Transverse colon (tissue), 4 donors: ENCODE measurements at regions of chr12 and their contacts with region 1.

Region 1: GRCh38 chr12:82414044-82414443 is 55.7 kb downstream of the METTL25 start:
- DNase-seq: no peak
- H3K4me3 ChIP-seq: no peak overlapping the region
- H3K27ac ChIP-seq: no peak overlapping the region
- H3K4me1 ChIP-seq: no peaks in the 10 kb centered on the region
- H3K27me3 ChIP-seq: no peaks in the 10 kb centered on the region
- CTCF ChIP-seq: no peak
- EP300 ChIP-seq: no peak
- POLR2A ChIP-seq: no peak

Region 2: DNA sequence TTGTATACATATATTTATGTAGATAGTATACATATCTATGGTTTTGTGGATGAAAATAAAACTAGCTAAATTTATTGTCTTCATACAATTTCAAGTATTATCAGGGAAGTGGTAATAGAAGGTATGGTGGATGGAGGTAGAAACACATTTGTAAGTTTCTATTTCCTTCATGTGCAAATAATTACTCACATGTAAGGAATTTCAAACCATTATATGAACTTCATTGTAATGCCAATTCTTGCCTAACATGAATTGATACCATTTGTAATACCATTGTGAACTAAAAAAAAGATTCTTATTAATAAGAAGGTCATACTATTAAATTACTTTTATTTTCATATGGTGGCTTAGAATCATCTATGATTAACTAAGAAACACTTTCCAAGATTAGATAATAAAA is 634.8 kb before region 1 on chr12:
- in situ Hi-C with region 1: no loop called
- intact Hi-C with region 1: loop called (anchors 5 kb)
- DNase-seq: no peak
- H3K4me3 ChIP-seq: no peak overlapping the region
- H3K27ac ChIP-seq: no peak overlapping the region
- H3K4me1 ChIP-seq: no peaks in the 10 kb centered on the region
- H3K27me3 ChIP-seq: no peaks in the 10 kb centered on the region
- CTCF ChIP-seq: no peak
- EP300 ChIP-seq: no peak
- POLR2A ChIP-seq: no peak

Region 3: GRCh38 chr12:82817368-82817767 is 403.3 kb after region 1 on chr12:
- in situ Hi-C with region 1: no loop called
- intact Hi-C with region 1: no loop called
- DNase-seq: no peak
- H3K4me3 ChIP-seq: no peak overlapping the region
- H3K27ac ChIP-seq: no peak overlapping the region
- H3K4me1 ChIP-seq: peaks cover 0 to 4% (median 0%) of the 10 kb centered on the region in 4 donors
- H3K27me3 ChIP-seq: no peaks in the 10 kb centered on the region
- CTCF ChIP-seq: no peak
- EP300 ChIP-seq: no peak
- POLR2A ChIP-seq: no peak